WTC11 (cell line): ENCODE measurements at regions of chr3 and their contacts with region 1.

Region 1: GRCh38 chr3:150495563-150496168 is 50.6 kb downstream of the SERP1 start:
- DNase-seq: no peak
- ATAC-seq: peak; percentile 39
- H3K4me3 Mint-ChIP-seq: no peak overlapping the region
- H3K27ac Mint-ChIP-seq: no peak overlapping the region
- H3K4me1 Mint-ChIP-seq: peaks cover 11% of the 10 kb centered on the region
- H3K27me3 Mint-ChIP-seq: no peaks in the 10 kb centered on the region
- CTCF ChIP-seq: peak; percentile 61

Region 2: DNA sequence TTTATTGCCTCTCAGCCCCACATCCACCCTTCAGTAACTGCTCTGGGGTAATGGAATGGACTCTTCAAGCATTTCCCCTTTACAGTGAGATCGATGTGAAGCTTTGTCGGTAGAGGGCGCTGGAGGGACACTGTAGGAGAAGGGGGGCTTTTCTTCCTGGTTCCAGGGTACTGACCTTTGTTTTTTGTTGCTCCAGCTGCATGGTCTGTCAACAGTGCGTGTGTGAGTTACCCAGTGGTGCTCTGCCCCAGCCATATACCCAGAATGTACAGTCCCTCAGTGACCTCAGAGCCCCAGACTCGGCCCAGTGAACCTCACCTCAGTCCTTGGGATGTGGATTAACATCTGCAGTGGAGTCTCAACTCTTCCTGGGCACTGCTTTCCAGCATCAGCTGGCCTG is 267.8 kb before region 1 on chr3:
- CTCF ChIA-PET with region 1: interaction called, 61 read pairs
- POLR2A ChIA-PET with region 1: no interaction called
- DNase-seq: peak; percentile 91
- ATAC-seq: peak; percentile 94
- H3K4me3 Mint-ChIP-seq: no peak overlapping the region
- H3K27ac Mint-ChIP-seq: no peak overlapping the region
- H3K4me1 Mint-ChIP-seq: peaks cover 23% of the 10 kb centered on the region
- H3K27me3 Mint-ChIP-seq: no peaks in the 10 kb centered on the region; the same call in 1 of the 2 replicates
- CTCF ChIP-seq: peak; percentile 78

Region 3: GRCh38 chr3:150238998-150239619 is 256.6 kb before region 1 on chr3:
- CTCF ChIA-PET with region 1: interaction called, 68 read pairs
- POLR2A ChIA-PET with region 1: no interaction called
- DNase-seq: peak; percentile 44
- ATAC-seq: peak; percentile 92
- H3K4me3 Mint-ChIP-seq: no peak overlapping the region
- H3K27ac Mint-ChIP-seq: peak overlapping the region; percentile 79; the same call in 1 of the 2 replicates
- H3K4me1 Mint-ChIP-seq: peaks cover 28% of the 10 kb centered on the region
- H3K27me3 Mint-ChIP-seq: no peaks in the 10 kb centered on the region
- CTCF ChIP-seq: 0 out of 2 replicates have a peak, but pooled peaks have one; percentile 18

Region 4: GRCh38 chr3:150286390-150287147 is 209.1 kb before region 1 on chr3:
- CTCF ChIA-PET with region 1: interaction called, 16 read pairs
- POLR2A ChIA-PET with region 1: no interaction called
- DNase-seq: no peak
- ATAC-seq: peak; percentile 97
- H3K4me3 Mint-ChIP-seq: no peak overlapping the region; the same call in 1 of the 2 replicates
- H3K27ac Mint-ChIP-seq: peak overlapping the region; percentile 59
- H3K4me1 Mint-ChIP-seq: peaks cover 9% of the 10 kb centered on the region
- H3K27me3 Mint-ChIP-seq: no peaks in the 10 kb centered on the region
- CTCF ChIP-seq: peak; percentile 57; the same call in 1 of the 2 replicates

Region 5: DNA sequence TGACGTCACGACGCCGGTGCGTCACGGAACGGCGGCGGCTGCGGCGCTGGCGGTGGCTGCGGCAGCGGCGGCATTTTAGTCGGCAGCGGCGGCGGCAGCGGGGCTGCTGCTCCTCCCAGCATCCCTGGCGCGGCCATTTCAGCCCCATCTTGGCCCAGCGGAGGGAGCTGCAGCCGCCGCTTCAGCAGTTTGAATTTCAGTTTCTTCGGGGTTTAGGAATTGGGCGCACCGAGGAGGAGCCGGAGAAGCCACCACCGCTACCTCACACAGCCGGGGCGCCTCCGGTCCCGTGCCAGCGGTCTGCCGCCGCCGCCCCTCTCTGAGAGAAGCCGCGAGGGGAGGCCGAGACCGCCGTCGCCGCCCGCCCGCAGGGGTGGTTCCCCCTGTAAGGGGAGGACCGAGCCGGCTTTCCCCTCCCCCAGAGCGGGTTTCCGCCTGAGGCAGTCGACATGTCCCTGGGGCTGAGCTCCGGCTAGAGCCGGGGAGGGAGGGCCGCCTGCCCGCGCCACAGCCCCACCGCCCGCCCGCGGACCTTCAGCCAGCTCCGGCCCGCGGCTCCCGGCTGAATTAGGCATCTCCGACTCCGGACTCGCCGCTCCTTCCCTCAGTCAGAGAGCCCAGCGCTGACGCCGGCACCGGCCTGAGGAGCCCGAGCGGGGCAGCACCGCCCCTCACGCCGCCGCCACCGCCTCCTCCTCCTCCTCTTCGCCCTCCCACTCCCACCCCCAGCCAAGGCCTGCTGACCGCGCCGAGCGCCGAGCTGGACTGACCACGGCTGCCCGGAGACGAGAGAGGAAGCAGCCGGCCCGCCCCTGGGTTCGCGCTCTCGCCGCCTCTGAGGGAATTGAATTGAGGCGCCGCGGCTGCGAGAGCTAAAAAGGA is 87.2 kb before region 1 on chr3 and contains the start of gene TSC22D2:
- CTCF ChIA-PET with region 1: interaction called, 30 read pairs
- POLR2A ChIA-PET with region 1: interaction called, 7 read pairs
- DNase-seq: peak; percentile 92
- ATAC-seq: peak; percentile 66
- H3K4me3 Mint-ChIP-seq: peak within 1 kb of the TSS; percentile 73
- H3K27ac Mint-ChIP-seq: peak within 1 kb of the TSS; percentile 97
- H3K4me1 Mint-ChIP-seq: peaks cover 44% of the 10 kb centered on the region
- H3K27me3 Mint-ChIP-seq: no peaks in the 10 kb centered on the region
- CTCF ChIP-seq: no peak
- total RNA-seq, gene TSC22D2: 20.1 to 24.0 TPM (median 21.1 TPM) in 3 replicates

Region 6: DNA sequence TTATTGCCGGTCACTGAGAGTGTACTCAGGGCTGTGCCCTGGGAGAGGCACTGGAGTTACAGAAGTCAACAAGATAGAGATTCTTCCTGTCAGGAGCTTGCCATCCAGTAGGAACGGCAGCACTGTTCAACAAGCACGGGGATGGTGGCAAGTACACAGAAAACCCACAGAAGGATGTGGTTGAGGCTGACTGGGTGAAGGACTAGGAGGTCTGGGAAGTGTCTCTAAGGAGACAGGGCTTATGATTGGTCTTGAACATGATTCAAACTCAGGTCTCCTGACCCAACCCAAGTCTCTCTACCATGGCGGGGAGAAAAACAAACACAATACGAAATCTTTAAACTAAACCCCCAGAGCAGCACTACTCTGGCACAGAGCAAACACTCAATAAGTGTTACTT is 170.5 kb after region 1 on chr3:
- CTCF ChIA-PET with region 1: no interaction called
- POLR2A ChIA-PET with region 1: no interaction called
- DNase-seq: no peak
- ATAC-seq: no peak
- H3K4me3 Mint-ChIP-seq: no peak overlapping the region
- H3K27ac Mint-ChIP-seq: no peak overlapping the region
- H3K4me1 Mint-ChIP-seq: no peaks in the 10 kb centered on the region
- H3K27me3 Mint-ChIP-seq: no peaks in the 10 kb centered on the region
- CTCF ChIP-seq: no peak

Region 7: DNA sequence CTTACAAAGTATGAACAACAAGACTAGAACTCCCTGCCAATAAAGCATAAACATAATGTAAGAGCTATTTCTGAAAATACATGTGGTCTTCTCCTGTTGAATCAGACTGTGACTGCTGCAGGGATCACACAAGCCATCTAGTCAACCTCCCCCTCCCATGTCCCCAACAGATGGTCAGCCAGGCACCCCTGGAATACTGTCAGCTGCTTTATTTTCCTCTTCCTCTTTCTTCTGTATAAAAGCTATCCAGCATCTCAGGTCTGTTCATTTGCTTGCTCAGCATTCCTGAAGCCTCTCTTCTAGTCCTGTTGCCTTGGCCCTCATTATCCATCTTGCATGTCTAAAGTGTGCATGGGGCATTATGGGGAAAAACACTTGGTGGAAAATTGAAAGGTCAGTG is 416.1 kb after region 1 on chr3:
- CTCF ChIA-PET with region 1: no interaction called
- POLR2A ChIA-PET with region 1: no interaction called
- DNase-seq: no peak
- ATAC-seq: no peak
- H3K4me3 Mint-ChIP-seq: no peak overlapping the region
- H3K27ac Mint-ChIP-seq: no peak overlapping the region
- H3K4me1 Mint-ChIP-seq: no peaks in the 10 kb centered on the region
- H3K27me3 Mint-ChIP-seq: no peaks in the 10 kb centered on the region
- CTCF ChIP-seq: no peak